Naive thymus-derived CD8-positive, alpha-beta T cell (primary cell): ENCODE measurements at regions of chr14 and their contacts with region 1.

Region 1: GRCh38 chr14:91402771-91403600 is 14.6 kb downstream of the CCDC88C start:
- DNase-seq: peak in 5 of 10 donors; percentile 32 to 59 (median 52)
- ATAC-seq: peak; percentile 7 to 32
- H3K4me3 Mint-ChIP-seq: peak overlapping the region; percentile 75 to 88 (median 84)
- H3K27ac Mint-ChIP-seq: peak overlapping the region; percentile 91 to 99 (median 98)
- H3K4me1 Mint-ChIP-seq: peaks cover 49 to 99% (median 95%) of the 10 kb centered on the region in 4 donors
- H3K27me3 Mint-ChIP-seq: no peaks in the 10 kb centered on the region

Region 2: GRCh38 chr14:91373591-91374254 is 29.3 kb before region 1 on chr14:
- POLR2A ChIA-PET with region 1: interaction called, 68 read pairs
- DNase-seq: peak in 4 of 10 donors; percentile 45 to 57 (median 52)
- ATAC-seq: peak; percentile 33 to 51
- H3K4me3 Mint-ChIP-seq: peak overlapping the region; percentile 76 to 96 (median 85)
- H3K27ac Mint-ChIP-seq: peak overlapping the region; percentile 85 to 98 (median 94)
- H3K4me1 Mint-ChIP-seq: peaks cover 67 to 99% (median 99%) of the 10 kb centered on the region in 4 donors
- H3K27me3 Mint-ChIP-seq: no peaks in the 10 kb centered on the region

Region 3: DNA sequence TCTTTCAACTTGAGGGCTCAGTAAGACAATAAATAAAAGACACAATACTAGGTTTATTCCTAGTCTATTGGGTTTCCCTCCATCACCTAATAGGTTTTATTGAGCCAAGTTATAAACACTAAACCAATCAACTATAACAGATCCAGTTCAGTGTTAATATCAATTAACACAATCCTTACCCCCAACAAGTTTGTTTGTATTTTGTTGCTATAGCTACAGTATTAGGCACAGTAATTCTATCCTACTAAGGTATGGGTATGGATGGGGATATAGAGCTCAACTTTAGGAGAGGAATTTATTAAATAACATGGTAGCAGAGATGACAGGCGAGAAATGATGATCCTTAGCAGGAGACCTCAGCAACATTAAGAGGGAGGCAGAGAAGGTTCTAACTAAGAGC is 93.8 kb after region 1 on chr14:
- POLR2A ChIA-PET with region 1: no interaction called
- DNase-seq: no peak
- ATAC-seq: no peak
- H3K4me3 Mint-ChIP-seq: peak overlapping the region; percentile 17 to 79 (median 74)
- H3K27ac Mint-ChIP-seq: peak overlapping the region in 9 of 10 donors; percentile 8 to 82 (median 58)
- H3K4me1 Mint-ChIP-seq: peaks cover 40 to 93% (median 83%) of the 10 kb centered on the region in 4 donors
- H3K27me3 Mint-ChIP-seq: no peaks in the 10 kb centered on the region

Region 4: DNA sequence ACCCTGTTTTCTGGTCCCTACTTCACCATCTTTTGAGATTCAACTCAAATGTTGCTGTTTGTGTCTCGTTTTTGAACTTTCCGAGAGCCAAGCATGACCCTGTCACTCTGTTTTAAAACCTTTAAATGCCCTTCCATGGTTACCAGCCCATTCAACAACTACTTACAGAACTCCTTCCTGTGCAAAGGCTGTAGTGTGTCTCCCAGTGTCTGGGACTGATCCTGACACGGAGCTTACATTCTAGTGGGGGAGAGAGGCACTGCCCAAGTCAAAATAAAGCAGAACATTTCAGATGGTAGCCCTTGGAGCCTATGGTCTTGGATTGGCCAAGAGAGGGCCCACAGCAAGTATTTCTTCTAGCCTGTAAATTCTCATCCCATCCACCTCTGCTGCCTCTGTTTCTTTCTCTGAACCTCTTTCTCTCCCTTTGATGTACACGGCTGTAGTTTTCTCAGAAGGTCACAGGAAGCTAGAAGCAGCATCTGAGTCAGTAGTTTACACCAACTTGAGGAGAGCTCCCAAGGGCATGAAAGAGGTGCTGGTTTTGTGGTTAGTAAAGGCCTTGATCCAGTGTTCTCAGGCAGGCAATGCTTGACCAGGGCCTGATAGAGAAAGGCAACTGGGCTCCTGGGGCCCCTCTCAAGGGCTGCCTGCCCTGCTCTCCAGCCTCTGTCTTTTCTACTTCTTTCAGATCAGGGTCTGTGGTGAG is 877.7 kb after region 1 on chr14:
- POLR2A ChIA-PET with region 1: no interaction called
- DNase-seq: peak in 4 of 10 donors; percentile 2 to 40 (median 24)
- ATAC-seq: peak; percentile 81 to 82
- H3K4me3 Mint-ChIP-seq: peak overlapping the region in 9 of 10 donors; percentile 12 to 58 (median 31)
- H3K27ac Mint-ChIP-seq: peak overlapping the region; percentile 12 to 89 (median 70)
- H3K4me1 Mint-ChIP-seq: peaks cover 17 to 31% (median 21%) of the 10 kb centered on the region in 4 donors
- H3K27me3 Mint-ChIP-seq: peaks cover 0 to 4% (median 0%) of the 10 kb centered on the region in 5 donors